Transverse colon (tissue), 4 donors: ENCODE measurements at regions of chr4 and their contacts with region 1.

Region 1: GRCh38 chr4:151129801-151130200 is 30.4 kb downstream of the RPS3A start:
- DNase-seq: no peak
- H3K4me3 ChIP-seq: no peak overlapping the region
- H3K27ac ChIP-seq: no peak overlapping the region
- H3K4me1 ChIP-seq: no peaks in the 10 kb centered on the region
- H3K27me3 ChIP-seq: no peaks in the 10 kb centered on the region
- CTCF ChIP-seq: no peak
- EP300 ChIP-seq: no peak
- POLR2A ChIP-seq: no peak

Region 2: GRCh38 chr4:151147000-151147399 is 17.2 kb after region 1 on chr4:
- in situ Hi-C with region 1: no loop called
- intact Hi-C with region 1: loop called (anchors 2 kb)
- DNase-seq: no peak
- H3K4me3 ChIP-seq: no peak overlapping the region
- H3K27ac ChIP-seq: no peak overlapping the region
- H3K4me1 ChIP-seq: no peaks in the 10 kb centered on the region
- H3K27me3 ChIP-seq: no peaks in the 10 kb centered on the region
- CTCF ChIP-seq: no peak
- EP300 ChIP-seq: no peak
- POLR2A ChIP-seq: no peak